CD4-positive, alpha-beta T cell (primary cell): ENCODE measurements at regions of chr11 and their contacts with region 1.

Region 1: DNA sequence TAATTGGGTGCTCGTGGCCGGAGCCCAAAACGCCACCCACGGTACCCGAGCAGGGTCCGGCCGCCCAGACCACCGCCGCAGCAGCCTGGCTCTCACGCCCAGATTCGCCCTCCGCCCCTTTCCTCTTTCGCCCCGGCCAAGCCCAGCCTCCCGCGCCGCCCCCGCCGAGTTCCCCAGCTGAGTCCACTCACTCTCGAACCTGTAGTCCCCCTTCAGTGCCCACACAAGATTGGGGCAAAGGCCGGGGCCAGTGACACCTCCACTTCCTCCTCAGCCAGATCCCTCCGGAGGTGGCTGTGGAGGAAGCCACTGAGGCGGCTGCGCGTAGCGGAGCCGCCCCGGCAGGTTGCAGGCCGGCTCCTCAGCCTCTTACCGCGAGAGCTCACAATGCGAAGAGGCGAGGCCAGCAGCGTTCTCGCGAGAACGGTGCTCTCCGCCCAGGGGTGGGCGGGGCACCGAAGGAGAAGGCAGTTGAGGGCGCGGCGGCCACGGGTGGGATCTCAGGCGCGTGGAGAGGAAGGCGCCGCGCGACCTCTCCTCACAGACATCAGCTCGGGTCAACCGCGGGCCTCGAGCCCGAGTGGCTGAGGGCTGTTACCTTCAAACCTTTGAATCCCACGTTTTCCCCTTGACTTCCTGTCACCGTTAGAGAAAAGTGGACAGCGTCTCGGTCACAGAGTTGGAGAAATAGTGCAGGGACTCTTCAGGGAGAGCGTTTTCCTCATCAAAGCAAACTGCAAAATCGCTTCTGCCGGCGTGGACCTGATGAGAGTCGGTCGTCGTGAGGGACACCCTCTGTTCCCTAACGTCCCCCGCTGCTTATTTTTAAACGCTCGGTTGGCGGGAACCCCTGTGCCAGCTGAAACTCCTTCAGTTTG is at the start of gene BTBD10:
- DNase-seq: peak; percentile 84 to 98 (median 90)
- ATAC-seq: peak; percentile 98
- H3K4me3 ChIP-seq: peak within 1 kb of the TSS; percentile 77
- H3K4me3 Mint-ChIP-seq: peak within 1 kb of the TSS; percentile 100
- H3K27ac ChIP-seq: peak within 1 kb of the TSS; percentile 82 to 92
- H3K27ac Mint-ChIP-seq: peak within 1 kb of the TSS; percentile 99
- H3K4me1 ChIP-seq: peaks cover 15% of the 10 kb centered on the region
- H3K4me1 Mint-ChIP-seq: peaks cover 54% of the 10 kb centered on the region
- H3K27me3 ChIP-seq: no peaks in the 10 kb centered on the region
- H3K27me3 Mint-ChIP-seq: no peaks in the 10 kb centered on the region
- CTCF ChIP-seq: no peak
- total RNA-seq, gene BTBD10: 13.3 to 14.8 TPM

Region 2: DNA sequence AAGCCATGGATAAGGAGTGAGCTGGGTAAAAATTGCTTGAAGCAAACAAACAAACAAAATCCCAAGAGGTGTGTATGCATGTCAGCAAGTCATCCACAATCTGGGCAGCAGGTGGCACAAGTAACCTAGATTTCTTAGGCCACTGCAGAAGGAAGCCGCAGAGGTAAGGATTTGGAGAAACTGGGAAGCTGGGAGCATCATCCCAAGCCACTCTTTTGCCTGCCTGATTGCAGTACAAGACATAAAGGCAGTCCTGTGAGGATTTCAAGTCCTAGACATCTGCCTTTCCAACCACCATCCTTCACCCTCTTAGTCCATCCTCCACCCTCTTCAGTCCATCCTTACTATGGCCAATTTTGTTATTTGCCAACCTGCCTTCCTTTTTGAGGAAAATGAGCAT is 252.7 kb before region 1 on chr11:
- CTCF ChIA-PET with region 1: no interaction called
- POLR2A ChIA-PET with region 1: interaction called, 3 read pairs
- intact Hi-C with region 1: loop called in 1 of 2 experiments (anchors 10 kb)
- DNase-seq: peak in 6 of 14 experiments; percentile 17 to 59 (median 30)
- ATAC-seq: no peak
- H3K4me3 ChIP-seq: no peak overlapping the region
- H3K4me3 Mint-ChIP-seq: no peak overlapping the region
- H3K27ac ChIP-seq: no peak overlapping the region
- H3K27ac Mint-ChIP-seq: no peak overlapping the region
- H3K4me1 ChIP-seq: peaks cover 14% of the 10 kb centered on the region
- H3K4me1 Mint-ChIP-seq: peaks cover 31% of the 10 kb centered on the region
- H3K27me3 ChIP-seq: no peaks in the 10 kb centered on the region
- H3K27me3 Mint-ChIP-seq: no peaks in the 10 kb centered on the region
- CTCF ChIP-seq: peak; percentile 38

Region 3: GRCh38 chr11:13486926-13487660 is 24.0 kb after region 1 on chr11:
- CTCF ChIA-PET with region 1: interaction called, 11 read pairs
- POLR2A ChIA-PET with region 1: interaction called, 12 read pairs
- intact Hi-C with region 1: no loop called
- DNase-seq: peak; percentile 34 to 80 (median 60)
- ATAC-seq: peak; percentile 84
- H3K4me3 ChIP-seq: peak overlapping the region; percentile 50
- H3K4me3 Mint-ChIP-seq: peak overlapping the region; percentile 77
- H3K27ac ChIP-seq: no peak overlapping the region
- H3K27ac Mint-ChIP-seq: peak overlapping the region; percentile 18
- H3K4me1 ChIP-seq: peaks cover 4% of the 10 kb centered on the region
- H3K4me1 Mint-ChIP-seq: peaks cover 5% of the 10 kb centered on the region
- H3K27me3 ChIP-seq: no peaks in the 10 kb centered on the region
- H3K27me3 Mint-ChIP-seq: peaks cover 12% of the 10 kb centered on the region
- CTCF ChIP-seq: no peak

Region 4: GRCh38 chr11:14358729-14359439 is 895.7 kb after region 1 on chr11 and contains the start of gene RRAS2:
- CTCF ChIA-PET with region 1: no interaction called
- POLR2A ChIA-PET with region 1: no interaction called
- intact Hi-C with region 1: loop called in 1 of 2 experiments (anchors 5 kb)
- DNase-seq: peak; percentile 65 to 90 (median 74)
- ATAC-seq: peak; percentile 95
- H3K4me3 ChIP-seq: peak within 1 kb of the TSS; percentile 69
- H3K4me3 Mint-ChIP-seq: peak within 1 kb of the TSS; percentile 92
- H3K27ac ChIP-seq: no peak within 1 kb of the TSS
- H3K27ac Mint-ChIP-seq: peak within 1 kb of the TSS; percentile 75
- H3K4me1 ChIP-seq: peaks cover 13% of the 10 kb centered on the region
- H3K4me1 Mint-ChIP-seq: peaks cover 30% of the 10 kb centered on the region
- H3K27me3 ChIP-seq: no peaks in the 10 kb centered on the region
- H3K27me3 Mint-ChIP-seq: no peaks in the 10 kb centered on the region
- CTCF ChIP-seq: no peak
- total RNA-seq, gene RRAS2: 20.7 to 21.2 TPM